ENCODE measurements at regions of chr20 and their contacts with region 1.

Region 1: GRCh38 chr20:33097001-33097400 is 17.6 kb downstream of the BPIFB4 start:
- DNase-seq: peak in 3 of 7 donors; percentile 8 to 53 (median 21)
- H3K4me3 ChIP-seq: no peak overlapping the region
- H3K27ac ChIP-seq: no peak overlapping the region
- H3K4me1 ChIP-seq: no peaks in the 10 kb centered on the region
- H3K27me3 ChIP-seq: no peaks in the 10 kb centered on the region
- CTCF ChIP-seq: no peak
- POLR2A ChIP-seq: no peak

Region 2: DNA sequence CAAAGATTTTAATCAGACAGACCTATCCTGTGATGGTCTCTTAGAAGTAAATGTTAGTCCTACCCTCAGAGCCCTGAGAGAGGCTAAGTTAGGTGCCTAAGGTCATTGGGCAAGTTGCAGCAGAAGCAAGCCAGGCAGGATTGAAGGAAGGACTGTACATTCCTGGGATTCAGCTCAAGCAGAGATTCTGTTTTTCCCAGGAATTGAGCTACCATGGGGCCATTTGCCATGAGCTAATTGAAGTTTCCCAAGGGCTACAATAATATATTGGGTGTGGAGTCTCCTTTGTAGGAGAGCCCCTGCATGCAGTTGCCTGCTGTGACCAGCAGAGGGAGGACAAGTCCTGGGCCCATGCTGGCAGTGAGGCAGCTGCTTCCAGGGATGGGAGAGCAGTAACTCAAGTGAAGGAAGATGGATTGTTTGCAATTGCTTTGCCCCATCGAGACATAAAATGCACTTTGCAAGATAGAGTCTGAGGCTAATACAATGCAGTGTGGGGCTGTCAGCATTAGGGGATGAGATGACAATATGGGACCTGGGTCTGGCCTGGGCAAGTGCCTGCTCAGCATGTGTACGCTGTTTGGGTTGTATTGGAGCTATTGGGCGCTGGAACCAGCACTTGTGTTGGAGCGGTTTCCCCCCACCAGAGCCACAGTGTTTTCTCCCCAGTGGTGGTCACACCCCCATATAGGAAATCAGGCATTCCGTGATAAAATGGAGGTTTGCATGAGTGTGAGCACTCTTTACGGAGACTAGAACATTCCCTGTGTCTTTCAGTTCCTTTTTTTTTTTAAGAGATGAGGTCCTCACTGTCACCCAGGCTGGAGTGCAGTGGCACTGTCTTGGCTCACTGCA is 306.9 kb before region 1 on chr20:
- intact Hi-C with region 1: loop called in 1 of 2 experiments (anchors 5 kb)
- DNase-seq: peak; percentile 74 to 87 (median 79)
- H3K4me3 ChIP-seq: no peak overlapping the region
- H3K27ac ChIP-seq: no peak overlapping the region
- H3K4me1 ChIP-seq: no peaks in the 10 kb centered on the region
- H3K27me3 ChIP-seq: no peaks in the 10 kb centered on the region
- CTCF ChIP-seq: peak; percentile 94 to 99 (median 96)
- POLR2A ChIP-seq: no peak

Region 3: GRCh38 chr20:32902456-32903420 is 194.3 kb before region 1 on chr20:
- intact Hi-C with region 1: loop called in 1 of 2 experiments (anchors 5 kb)
- DNase-seq: peak; percentile 31 to 75 (median 53)
- H3K4me3 ChIP-seq: no peak overlapping the region
- H3K27ac ChIP-seq: no peak overlapping the region
- H3K4me1 ChIP-seq: no peaks in the 10 kb centered on the region
- H3K27me3 ChIP-seq: peaks cover 3% of the 10 kb centered on the region
- CTCF ChIP-seq: peak; percentile 78 to 95 (median 86)
- POLR2A ChIP-seq: no peak

Measured in adrenal gland (tissue), 19 donors.